Activated naive CD4-positive, alpha-beta T cell treated with anti-CD3 and anti-CD28 coated beads, Interleukin-2, amount 10 ng/mL, durations not matched to agents 7 days and 5 days (primary cell): ENCODE measurements at regions of chr11 and their contacts with region 1.

Region 1: DNA sequence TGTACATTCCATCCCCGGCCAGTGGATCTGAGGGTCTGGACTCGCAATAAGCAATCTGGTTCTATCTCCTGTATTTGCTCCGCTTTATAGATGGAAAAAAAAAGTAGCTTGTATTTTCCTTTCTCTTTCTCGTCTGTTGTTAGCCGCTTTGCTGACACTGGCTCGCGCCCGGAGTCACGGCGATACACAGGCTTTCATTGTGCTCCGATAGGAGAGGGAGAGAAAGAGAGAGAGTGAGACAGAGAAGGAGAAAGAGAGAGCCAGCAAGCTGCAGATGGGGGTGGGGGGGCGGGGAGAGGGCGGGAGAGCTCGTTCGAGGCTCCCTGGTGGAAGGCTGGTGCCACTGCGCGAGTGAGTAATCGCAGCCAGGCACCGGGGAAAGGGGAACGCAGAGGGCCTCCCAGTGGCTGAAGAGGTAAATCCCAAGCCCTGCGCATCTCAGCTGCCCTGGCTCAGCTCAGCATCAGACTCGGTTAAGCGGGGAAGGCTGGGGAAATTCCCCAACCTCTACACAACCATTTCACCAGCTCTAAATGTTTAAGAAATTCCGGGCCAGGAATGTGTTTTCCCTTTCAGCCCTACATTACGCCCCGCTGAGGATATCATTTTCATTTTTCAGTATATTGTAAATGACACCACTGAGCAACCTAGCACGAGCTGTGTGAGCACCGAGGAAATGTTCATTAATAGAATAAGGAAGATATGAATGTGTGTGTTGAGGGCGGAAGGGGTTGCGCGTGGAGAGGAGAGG is at the start of gene MAML2:
- DNase-seq: peak; percentile 93
- H3K4me3 Mint-ChIP-seq: peak within 1 kb of the TSS; percentile 94
- H3K27ac Mint-ChIP-seq: peak within 1 kb of the TSS; percentile 91
- H3K4me1 Mint-ChIP-seq: peaks cover 30% of the 10 kb centered on the region
- H3K27me3 Mint-ChIP-seq: no peaks in the 10 kb centered on the region

Region 2: DNA sequence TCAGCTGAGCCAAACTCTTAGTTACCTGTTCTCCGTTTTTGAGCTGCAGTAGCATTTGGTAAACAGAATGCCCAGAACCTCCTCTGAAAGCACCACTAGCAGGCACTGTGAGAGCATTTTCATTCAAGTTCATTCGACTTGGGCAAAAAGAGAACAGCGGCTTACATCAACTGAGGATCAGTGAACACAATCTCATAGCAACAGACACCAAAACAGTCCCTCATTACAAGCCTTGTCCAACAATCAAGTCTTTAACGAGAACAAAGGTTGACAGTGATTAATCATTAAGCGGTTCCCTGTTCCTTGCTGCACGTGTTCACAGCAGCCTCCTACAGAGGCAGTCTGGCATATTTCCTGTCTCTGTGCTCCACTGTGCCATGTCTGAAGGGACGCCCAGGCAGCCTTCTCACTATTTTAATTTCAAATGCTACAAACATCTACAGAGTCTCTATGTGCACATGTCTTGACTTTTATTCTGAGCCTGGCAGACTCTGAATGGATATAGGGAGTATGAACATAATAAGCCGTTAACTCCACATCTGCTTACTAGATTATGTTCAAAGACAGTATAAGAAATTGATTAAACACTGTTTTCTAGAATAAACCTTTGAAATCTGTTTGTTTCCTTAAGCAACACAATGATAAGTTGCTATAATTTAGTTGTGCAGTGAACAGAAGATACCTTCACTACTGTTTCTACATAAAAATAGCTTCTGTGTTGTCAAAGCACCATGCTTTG is 330.9 kb before region 1 on chr11:
- CTCF ChIA-PET with region 1: interaction called, 77 read pairs
- DNase-seq: peak; percentile 54
- H3K4me3 Mint-ChIP-seq: no peak overlapping the region
- H3K27ac Mint-ChIP-seq: peak overlapping the region; percentile 78
- H3K4me1 Mint-ChIP-seq: peaks cover 59% of the 10 kb centered on the region
- H3K27me3 Mint-ChIP-seq: no peaks in the 10 kb centered on the region

Region 3: GRCh38 chr11:96091476-96091875 is 251.7 kb before region 1 on chr11:
- CTCF ChIA-PET with region 1: interaction called, 47 read pairs
- DNase-seq: peak; percentile 34
- H3K4me3 Mint-ChIP-seq: no peak overlapping the region
- H3K27ac Mint-ChIP-seq: no peak overlapping the region
- H3K4me1 Mint-ChIP-seq: peaks cover 5% of the 10 kb centered on the region
- H3K27me3 Mint-ChIP-seq: no peaks in the 10 kb centered on the region

Region 4: DNA sequence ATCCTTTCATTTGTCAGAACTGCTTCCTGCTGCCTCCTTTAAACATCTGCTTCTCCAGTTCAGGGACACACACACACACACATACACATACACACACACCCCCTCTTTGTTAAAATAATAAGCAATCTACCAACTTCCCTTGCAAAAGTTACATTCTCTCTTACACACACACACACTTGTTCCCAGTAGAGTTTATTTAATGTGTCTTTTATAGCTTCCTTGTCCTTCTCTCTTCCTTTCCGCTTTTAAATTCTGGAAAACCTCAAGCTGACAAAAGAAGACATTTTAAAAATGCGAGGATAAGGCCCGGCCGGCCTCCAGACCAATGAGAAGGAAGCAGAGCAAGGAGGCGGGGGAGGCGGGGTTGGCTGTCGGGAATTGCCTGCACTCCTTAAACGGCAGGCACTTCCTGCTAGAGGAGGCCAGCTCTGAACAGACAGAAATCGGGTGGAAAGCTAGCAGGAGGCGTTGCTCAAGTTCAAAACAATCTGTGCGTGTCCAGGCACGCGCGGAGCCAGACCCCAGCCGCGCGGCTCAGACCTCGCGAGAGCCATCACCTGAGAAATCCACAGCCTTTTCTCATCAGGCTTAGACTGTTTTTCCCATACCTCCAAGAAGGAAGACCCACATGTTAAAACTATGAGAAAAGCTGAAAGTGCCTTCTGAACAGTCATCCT is 100.0 kb before region 1 on chr11:
- CTCF ChIA-PET with region 1: interaction called, 144 read pairs
- DNase-seq: peak; percentile 87
- H3K4me3 Mint-ChIP-seq: peak overlapping the region; percentile 75
- H3K27ac Mint-ChIP-seq: peak overlapping the region; percentile 93
- H3K4me1 Mint-ChIP-seq: peaks cover 58% of the 10 kb centered on the region
- H3K27me3 Mint-ChIP-seq: no peaks in the 10 kb centered on the region

Region 5: GRCh38 chr11:96331699-96332116 is 11.4 kb before region 1 on chr11:
- CTCF ChIA-PET with region 1: interaction called, 18 read pairs
- DNase-seq: no peak
- H3K4me3 Mint-ChIP-seq: no peak overlapping the region
- H3K27ac Mint-ChIP-seq: no peak overlapping the region
- H3K4me1 Mint-ChIP-seq: peaks cover 74% of the 10 kb centered on the region
- H3K27me3 Mint-ChIP-seq: no peaks in the 10 kb centered on the region